GM10248 (cell line): ENCODE measurements at regions of chr17 and their contacts with region 1.

Region 1: GRCh38 chr17:42078396-42079043 is 19.8 kb downstream of the ZNF385C start:
- DNase-seq: no peak
- CTCF ChIP-seq: no peak

Region 2: DNA sequence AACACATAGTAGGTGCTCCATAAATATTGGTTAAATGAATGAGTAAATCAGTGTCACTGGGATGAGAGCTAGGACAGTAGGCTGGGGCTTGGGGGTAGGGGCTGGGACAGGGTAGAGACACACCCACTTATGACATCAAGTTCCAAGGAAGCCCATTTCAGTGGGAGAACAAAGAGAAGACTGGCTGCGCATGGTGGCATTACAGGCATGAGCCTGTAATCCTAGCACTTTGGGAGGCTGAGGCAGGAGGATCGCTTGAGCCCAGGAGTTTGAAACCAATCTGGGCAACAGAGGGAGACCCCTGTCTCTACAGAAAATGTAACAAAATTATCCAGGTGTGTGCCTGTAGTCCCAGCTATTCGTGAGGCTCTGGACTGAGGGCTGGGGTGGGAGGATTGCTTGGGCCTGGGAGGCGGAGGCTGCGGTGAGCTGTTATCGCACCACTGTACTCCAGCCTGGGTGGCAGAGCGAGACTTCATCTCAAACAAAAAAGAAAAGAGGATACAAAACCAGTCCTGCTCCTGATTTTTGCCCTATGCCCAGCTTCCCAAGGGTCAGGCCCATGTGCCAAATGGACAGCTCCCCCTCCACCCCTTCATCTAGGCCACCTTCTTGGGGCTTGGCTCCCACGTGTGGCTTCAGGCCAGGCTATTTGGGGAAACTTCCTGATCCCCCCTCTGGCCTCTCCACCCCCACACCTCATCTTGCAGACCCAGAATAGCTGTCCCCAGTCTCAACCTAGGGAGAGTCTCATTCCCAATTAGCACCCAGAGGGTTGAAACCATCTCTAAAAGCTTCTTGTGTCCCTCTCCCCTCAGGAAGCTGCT is 12.7 kb after region 1 on chr17:
- CTCF ChIA-PET with region 1: interaction called, 11 read pairs
- POLR2A ChIA-PET with region 1: no interaction called
- DNase-seq: no peak
- CTCF ChIP-seq: no peak

Region 3: DNA sequence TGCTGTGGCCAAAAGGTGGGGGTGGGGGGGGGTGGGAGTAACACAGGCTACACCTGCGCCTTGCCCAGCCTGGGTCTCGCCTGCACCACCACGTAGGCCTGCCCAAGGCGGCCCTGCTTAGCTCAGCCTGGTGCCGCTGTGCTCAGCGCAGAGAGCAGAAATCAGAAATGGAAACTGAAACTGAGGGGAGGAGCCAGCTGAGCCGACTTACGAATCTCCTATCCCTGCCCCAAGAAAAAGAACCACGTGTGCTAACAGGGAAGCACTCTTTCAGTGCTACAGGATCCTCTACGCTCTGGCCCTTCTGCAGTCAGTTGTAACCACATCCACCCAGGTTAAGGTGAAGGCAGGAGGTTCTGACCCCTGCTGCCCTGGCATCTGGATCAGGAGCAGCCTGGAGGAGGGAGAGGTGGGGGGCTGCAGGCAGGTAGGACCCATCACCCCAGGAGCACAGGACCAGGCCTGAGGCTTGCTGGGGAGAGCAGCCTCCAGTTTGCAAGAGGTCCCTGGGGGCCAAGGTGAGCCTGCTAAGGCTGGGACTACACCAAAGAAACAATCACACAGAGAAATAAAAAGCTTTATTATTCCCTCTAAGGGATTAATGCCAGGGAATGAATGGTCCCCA is 34.1 kb after region 1 on chr17 and contains the start of gene DHX58:
- CTCF ChIA-PET with region 1: no interaction called
- POLR2A ChIA-PET with region 1: no interaction called
- DNase-seq: peak; percentile 93
- CTCF ChIP-seq: no peak